ENCODE measurements at regions of chr7 and their contacts with region 1.

Region 1: DNA sequence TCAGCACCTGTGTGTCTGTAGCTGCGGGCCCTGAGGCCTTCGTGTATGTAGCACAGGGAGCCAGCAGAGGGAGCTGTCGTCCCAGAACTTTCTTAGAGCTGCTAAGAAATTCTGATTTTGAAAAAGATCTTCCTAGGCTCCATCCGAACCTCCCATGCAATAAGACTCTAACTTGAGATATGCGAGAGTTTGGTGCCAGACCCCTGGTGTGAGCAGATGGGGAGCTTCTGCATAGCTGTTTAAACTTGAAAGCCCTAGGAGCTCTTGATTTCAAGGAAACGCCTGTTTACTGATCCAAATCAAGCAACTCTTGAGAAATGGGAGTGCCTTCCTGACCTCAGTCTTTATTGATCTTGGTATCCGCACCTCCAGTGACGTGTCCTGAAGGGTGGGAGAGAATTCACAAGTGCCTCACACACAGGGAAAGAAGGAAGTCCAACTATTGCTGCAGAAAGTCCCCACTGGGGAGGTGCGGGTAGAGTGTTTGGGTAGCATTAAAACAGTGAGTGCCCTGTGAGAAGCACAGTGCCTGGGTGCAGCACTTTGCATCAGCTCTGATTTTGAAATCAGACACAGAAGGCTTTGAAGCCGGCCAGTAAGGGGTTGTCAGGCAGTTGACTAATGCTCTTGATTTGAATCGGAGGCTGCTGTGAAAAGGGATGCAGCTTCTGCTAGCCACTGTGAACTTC is 66.4 kb upstream of the STRIP2 start:
- DNase-seq: peak; percentile 72
- ATAC-seq: peak; percentile 96
- H3K4me3 ChIP-seq: no peak overlapping the region
- H3K27ac ChIP-seq: no peak overlapping the region
- H3K4me1 ChIP-seq: peaks cover 1% of the 10 kb centered on the region; the same call in 1 of the 2 replicates
- H3K27me3 ChIP-seq: no peaks in the 10 kb centered on the region
- CTCF ChIP-seq: peak; percentile 89
- POLR2A ChIP-seq: no peak
- RAD21 ChIP-seq: peak; percentile 87

Region 2: GRCh38 chr7:129218514-129219062 is 149.3 kb before region 1 on chr7:
- CTCF ChIA-PET with region 1: interaction called, 11 read pairs
- POLR2A ChIA-PET with region 1: no interaction called
- dilution Hi-C with region 1: no loop called
- in situ Hi-C with region 1: no loop called
- intact Hi-C with region 1: loop called (anchors 1 kb)
- DNase-seq: peak; percentile 78
- ATAC-seq: peak; percentile 98
- H3K4me3 ChIP-seq: no peak overlapping the region
- H3K27ac ChIP-seq: no peak overlapping the region
- H3K4me1 ChIP-seq: no peaks in the 10 kb centered on the region
- H3K27me3 ChIP-seq: no peaks in the 10 kb centered on the region
- CTCF ChIP-seq: peak; percentile 97
- POLR2A ChIP-seq: no peak
- RAD21 ChIP-seq: peak; percentile 98

Region 3: GRCh38 chr7:129391546-129392171 is 23.8 kb after region 1 on chr7:
- CTCF ChIA-PET with region 1: no interaction called
- POLR2A ChIA-PET with region 1: no interaction called
- dilution Hi-C with region 1: no loop called
- in situ Hi-C with region 1: no loop called
- intact Hi-C with region 1: no loop called
- DNase-seq: no peak
- ATAC-seq: no peak
- H3K4me3 ChIP-seq: no peak overlapping the region
- H3K27ac ChIP-seq: no peak overlapping the region
- H3K4me1 ChIP-seq: peaks cover 6% of the 10 kb centered on the region
- H3K27me3 ChIP-seq: no peaks in the 10 kb centered on the region
- CTCF ChIP-seq: no peak
- POLR2A ChIP-seq: no peak
- RAD21 ChIP-seq: no peak

Region 4: GRCh38 chr7:129468087-129468486 is 100.2 kb after region 1 on chr7:
- CTCF ChIA-PET with region 1: interaction called, 16 read pairs
- POLR2A ChIA-PET with region 1: no interaction called
- dilution Hi-C with region 1: no loop called
- in situ Hi-C with region 1: loop called (anchors 5 kb)
- intact Hi-C with region 1: loop called (anchors 1 kb)
- DNase-seq: peak; percentile 75
- ATAC-seq: peak; percentile 79
- H3K4me3 ChIP-seq: no peak overlapping the region
- H3K27ac ChIP-seq: no peak overlapping the region
- H3K4me1 ChIP-seq: peaks cover 1% of the 10 kb centered on the region; the same call in 1 of the 2 replicates
- H3K27me3 ChIP-seq: no peaks in the 10 kb centered on the region
- CTCF ChIP-seq: no peak
- POLR2A ChIP-seq: no peak
- RAD21 ChIP-seq: no peak

Region 5: GRCh38 chr7:129635300-129636029 is 267.6 kb after region 1 on chr7:
- CTCF ChIA-PET with region 1: no interaction called
- POLR2A ChIA-PET with region 1: no interaction called
- dilution Hi-C with region 1: no loop called
- in situ Hi-C with region 1: no loop called
- intact Hi-C with region 1: loop called (anchors 2 kb)
- DNase-seq: peak; percentile 86
- ATAC-seq: peak; percentile 97
- H3K4me3 ChIP-seq: no peak overlapping the region
- H3K27ac ChIP-seq: no peak overlapping the region
- H3K4me1 ChIP-seq: no peaks in the 10 kb centered on the region; the same call in 1 of the 2 replicates
- H3K27me3 ChIP-seq: no peaks in the 10 kb centered on the region
- CTCF ChIP-seq: peak; percentile 92
- POLR2A ChIP-seq: no peak
- RAD21 ChIP-seq: peak; percentile 88

Region 6: DNA sequence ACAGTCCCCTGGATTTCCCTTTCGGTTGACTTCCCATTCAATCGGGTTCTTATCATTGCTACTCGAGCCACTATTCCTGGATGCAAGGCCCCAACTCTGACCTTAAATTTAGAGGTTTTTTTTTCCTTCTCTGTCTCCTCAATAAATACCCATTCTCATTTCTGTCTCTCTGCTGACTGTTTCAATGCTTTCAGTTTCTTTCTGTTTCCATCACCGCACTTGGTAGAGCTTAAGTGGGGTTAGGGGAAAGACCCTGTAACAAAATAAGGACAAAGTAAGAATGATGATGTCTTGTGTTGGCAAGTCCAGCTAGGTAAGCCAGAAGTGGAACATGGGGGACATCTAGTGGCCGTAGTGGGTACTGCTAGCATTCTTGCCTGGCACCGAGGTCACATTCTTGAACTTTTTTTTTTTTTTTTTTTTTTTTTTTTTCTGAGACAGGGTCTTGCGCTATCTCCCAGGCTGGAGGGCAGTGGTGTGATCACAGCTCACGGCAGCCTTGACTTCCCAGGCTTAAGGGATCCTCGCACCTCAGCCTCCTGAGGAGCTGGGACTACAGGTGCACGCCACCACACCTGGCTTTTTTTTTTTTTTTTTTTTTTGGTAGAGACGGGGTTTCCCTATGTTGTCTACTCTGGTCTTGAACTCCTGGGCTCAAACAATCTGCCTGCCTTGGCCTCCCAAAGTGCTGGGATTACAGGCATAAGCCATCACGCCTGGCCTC is 643.0 kb after region 1 on chr7:
- CTCF ChIA-PET with region 1: no interaction called
- POLR2A ChIA-PET with region 1: no interaction called
- dilution Hi-C with region 1: no loop called
- in situ Hi-C with region 1: loop called (anchors 25 kb)
- intact Hi-C with region 1: no loop called
- DNase-seq: peak; percentile 88
- ATAC-seq: peak; percentile 73
- H3K4me3 ChIP-seq: no peak overlapping the region
- H3K27ac ChIP-seq: peak overlapping the region; percentile 22
- H3K4me1 ChIP-seq: peaks cover 10% of the 10 kb centered on the region
- H3K27me3 ChIP-seq: no peaks in the 10 kb centered on the region
- CTCF ChIP-seq: peak; percentile 94
- POLR2A ChIP-seq: peak; percentile 60
- RAD21 ChIP-seq: peak; percentile 94